ENCODE measurements at regions of chr3 and their contacts with region 1.

Region 1: DNA sequence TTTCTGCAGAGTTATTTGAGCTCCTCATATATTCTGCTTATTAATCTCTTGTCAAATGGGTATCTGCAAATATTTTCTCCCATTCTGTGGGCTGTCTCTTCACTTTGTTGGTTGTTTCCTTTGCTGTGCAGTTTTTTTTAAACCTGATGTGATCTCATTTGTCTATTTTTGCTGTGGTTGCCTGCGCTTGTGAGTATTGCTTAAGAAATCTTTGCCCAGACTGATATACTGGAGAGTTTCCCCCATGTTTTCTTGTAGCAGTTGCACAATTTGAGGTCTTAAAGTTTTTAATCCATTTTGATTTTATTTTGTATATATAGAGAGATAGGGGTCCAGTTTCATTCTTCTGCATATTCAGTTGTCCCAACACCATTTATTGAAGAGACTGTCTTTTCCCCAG is 102.3 kb downstream of the POLQ start:
- DNase-seq: no peak
- H3K4me3 ChIP-seq: no peak overlapping the region
- H3K27ac ChIP-seq: no peak overlapping the region
- H3K4me1 ChIP-seq: no peaks in the 10 kb centered on the region
- H3K27me3 ChIP-seq: no peaks in the 10 kb centered on the region
- CTCF ChIP-seq: no peak
- POLR2A ChIP-seq: no peak

Region 2: DNA sequence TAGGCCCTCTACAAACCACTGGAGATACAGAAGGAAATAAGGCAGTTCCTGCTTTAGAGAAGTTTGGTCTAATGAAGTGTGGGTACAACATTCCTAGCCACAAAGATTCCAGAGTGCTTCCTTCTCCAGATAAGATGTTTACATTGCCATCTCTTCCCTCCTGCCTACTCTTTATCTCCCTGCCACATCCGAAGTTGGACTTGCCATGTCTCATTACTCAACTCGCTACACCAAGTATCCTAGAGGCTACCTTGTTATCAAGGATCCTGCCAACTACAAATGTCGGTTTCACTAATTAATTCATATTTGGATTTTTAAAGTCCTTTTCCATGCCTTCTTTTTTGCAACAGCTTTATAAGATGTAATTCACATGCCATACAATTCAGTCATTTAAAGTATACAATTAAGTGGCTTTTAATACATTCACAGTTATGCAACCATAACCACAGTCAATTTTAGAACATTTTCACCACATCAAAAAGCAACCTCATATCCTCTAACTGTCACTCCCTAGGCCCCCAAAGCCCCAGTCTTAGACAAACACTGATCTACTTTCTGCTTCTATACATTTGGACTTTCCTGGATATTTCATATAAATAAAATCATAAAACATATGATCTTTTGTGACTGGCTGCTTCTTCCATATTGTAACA is 827.9 kb after region 1 on chr3:
- intact Hi-C with region 1: loop called (anchors 5 kb)
- DNase-seq: no peak
- H3K4me3 ChIP-seq: no peak overlapping the region
- H3K27ac ChIP-seq: no peak overlapping the region
- H3K4me1 ChIP-seq: no peaks in the 10 kb centered on the region
- H3K27me3 ChIP-seq: no peaks in the 10 kb centered on the region
- CTCF ChIP-seq: no peak
- POLR2A ChIP-seq: no peak